GM12878 (cell line): ENCODE measurements at regions of chr6 and their contacts with region 1.

Region 1: GRCh38 chr6:36302227-36302976 is 32.5 kb downstream of the PNPLA1 start:
- DNase-seq: peak; percentile 77
- ATAC-seq: peak; percentile 99
- H3K4me3 ChIP-seq: no peak overlapping the region
- H3K27ac ChIP-seq: no peak overlapping the region
- H3K4me1 ChIP-seq: no peaks in the 10 kb centered on the region
- H3K27me3 ChIP-seq: no peaks in the 10 kb centered on the region
- CTCF ChIP-seq: peak; percentile 88 to 98 (median 98)
- EP300 ChIP-seq: no peak
- POLR2A ChIP-seq: no peak
- RAD21 ChIP-seq: peak; percentile 75

Region 2: DNA sequence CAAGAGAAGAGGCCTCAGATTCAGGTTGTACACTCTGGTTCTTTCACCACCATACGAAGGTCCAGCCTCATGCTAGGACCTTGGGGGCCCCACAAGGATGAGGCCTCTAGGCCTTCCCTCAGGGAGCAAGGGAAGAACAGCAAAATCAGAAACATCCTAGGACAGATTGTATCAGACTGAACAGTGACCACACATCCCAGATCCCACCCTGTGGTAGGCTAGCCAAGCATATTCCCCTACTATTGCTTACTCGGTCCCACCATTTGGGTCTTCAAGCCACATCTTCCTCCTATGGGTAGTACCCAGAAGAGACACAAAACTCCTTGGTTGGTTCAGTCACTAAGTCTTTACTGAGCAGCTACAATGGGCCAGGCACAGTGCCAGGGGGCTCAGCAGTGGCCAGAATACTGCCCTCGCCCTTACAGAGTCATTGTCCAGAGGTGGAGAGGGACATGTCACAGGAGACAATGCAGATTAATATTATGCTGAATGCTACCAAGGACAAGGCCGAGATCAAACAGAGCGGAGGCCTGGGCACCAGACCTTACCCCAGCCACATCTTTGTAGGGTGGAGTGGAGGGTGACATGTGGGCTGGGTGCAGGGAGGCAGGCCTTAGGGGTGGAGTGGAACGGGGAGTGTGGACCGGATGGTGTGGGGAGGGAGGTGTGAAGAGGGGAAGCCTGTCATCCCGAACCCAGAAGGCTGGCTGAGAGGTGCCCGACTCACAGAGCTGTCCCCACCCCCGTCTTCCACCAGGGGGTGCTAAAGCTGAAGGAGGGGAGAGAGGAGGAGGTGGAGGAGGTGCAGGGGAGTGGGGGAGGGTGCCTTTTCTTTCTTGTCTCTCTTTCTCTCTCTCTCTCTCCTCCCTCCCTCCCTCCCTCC is 178.9 kb before region 1 on chr6:
- CTCF ChIA-PET with region 1: interaction called, 19 read pairs
- POLR2A ChIA-PET with region 1: no interaction called
- RAD21 ChIA-PET with region 1: interaction called, 9 read pairs
- SMC1A ChIA-PET with region 1: interaction called, 6 read pairs
- in situ Hi-C with region 1: no loop called
- intact Hi-C with region 1: loop called (anchors 10 kb)
- DNase-seq: no peak
- ATAC-seq: peak; percentile 92
- H3K4me3 ChIP-seq: no peak overlapping the region
- H3K27ac ChIP-seq: no peak overlapping the region
- H3K4me1 ChIP-seq: peaks cover 26% of the 10 kb centered on the region
- H3K27me3 ChIP-seq: no peaks in the 10 kb centered on the region
- CTCF ChIP-seq: peak; percentile 75 to 93 (median 91)
- EP300 ChIP-seq: 0 out of 4 replicates have a peak, but pooled peaks of 1 of the 2 experiments have one; percentile 26
- POLR2A ChIP-seq: no peak
- RAD21 ChIP-seq: peak; percentile 92

Region 3: GRCh38 chr6:36290661-36291620 is 11.5 kb before region 1 on chr6:
- CTCF ChIA-PET with region 1: interaction called, 13 read pairs
- POLR2A ChIA-PET with region 1: interaction called, 4 read pairs
- RAD21 ChIA-PET with region 1: no interaction called
- SMC1A ChIA-PET with region 1: interaction called, 4 read pairs
- in situ Hi-C with region 1: no loop called
- intact Hi-C with region 1: no loop called
- DNase-seq: no peak
- ATAC-seq: no peak
- H3K4me3 ChIP-seq: no peak overlapping the region
- H3K27ac ChIP-seq: no peak overlapping the region
- H3K4me1 ChIP-seq: no peaks in the 10 kb centered on the region
- H3K27me3 ChIP-seq: no peaks in the 10 kb centered on the region
- CTCF ChIP-seq: no peak
- EP300 ChIP-seq: no peak
- POLR2A ChIP-seq: no peak
- RAD21 ChIP-seq: no peak

Region 4: DNA sequence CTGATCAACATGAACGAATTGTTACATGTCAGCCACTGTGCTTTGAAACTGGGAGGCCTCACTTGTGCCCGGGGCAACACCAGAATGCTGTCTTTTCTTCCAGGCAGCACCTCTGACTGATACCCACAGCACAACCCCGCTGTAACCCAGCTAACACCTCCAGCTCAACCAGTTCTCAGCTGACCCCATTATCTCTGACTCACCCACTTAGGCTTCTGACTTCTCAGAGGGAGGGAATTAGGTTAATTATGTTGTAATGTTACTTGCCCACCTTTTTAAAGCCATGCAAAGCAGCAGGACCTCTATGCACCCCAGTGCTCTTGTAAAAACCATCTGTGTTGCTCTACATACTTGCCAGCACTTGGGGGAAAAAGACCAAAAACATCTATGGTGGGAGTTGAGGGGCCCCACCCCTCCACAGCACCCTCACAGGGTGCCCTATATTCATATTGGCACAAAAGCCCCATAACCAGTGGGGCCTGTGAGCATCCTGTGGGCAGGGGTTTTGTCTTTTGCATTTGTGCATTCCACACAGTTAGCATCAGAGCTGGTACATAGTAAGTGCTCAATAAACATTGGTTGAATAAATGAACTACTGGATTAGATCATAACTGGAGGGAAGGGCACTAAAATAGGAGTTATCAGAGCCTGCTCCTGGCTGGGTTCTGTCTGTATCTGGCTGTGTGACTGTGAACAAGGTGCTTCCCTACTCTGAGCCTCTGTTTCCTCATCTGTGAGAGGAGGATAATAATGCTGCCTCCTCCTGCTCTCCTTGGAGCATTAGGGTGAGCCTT is 12.0 kb after region 1 on chr6:
- CTCF ChIA-PET with region 1: interaction called, 31 read pairs
- POLR2A ChIA-PET with region 1: no interaction called
- RAD21 ChIA-PET with region 1: interaction called, 11 read pairs
- SMC1A ChIA-PET with region 1: interaction called, 5 read pairs
- in situ Hi-C with region 1: no loop called
- intact Hi-C with region 1: no loop called
- DNase-seq: no peak
- ATAC-seq: peak; percentile 50
- H3K4me3 ChIP-seq: no peak overlapping the region
- H3K27ac ChIP-seq: no peak overlapping the region
- H3K4me1 ChIP-seq: peaks cover 20% of the 10 kb centered on the region
- H3K27me3 ChIP-seq: no peaks in the 10 kb centered on the region
- CTCF ChIP-seq: no peak
- EP300 ChIP-seq: no peak
- POLR2A ChIP-seq: no peak
- RAD21 ChIP-seq: no peak

Region 5: DNA sequence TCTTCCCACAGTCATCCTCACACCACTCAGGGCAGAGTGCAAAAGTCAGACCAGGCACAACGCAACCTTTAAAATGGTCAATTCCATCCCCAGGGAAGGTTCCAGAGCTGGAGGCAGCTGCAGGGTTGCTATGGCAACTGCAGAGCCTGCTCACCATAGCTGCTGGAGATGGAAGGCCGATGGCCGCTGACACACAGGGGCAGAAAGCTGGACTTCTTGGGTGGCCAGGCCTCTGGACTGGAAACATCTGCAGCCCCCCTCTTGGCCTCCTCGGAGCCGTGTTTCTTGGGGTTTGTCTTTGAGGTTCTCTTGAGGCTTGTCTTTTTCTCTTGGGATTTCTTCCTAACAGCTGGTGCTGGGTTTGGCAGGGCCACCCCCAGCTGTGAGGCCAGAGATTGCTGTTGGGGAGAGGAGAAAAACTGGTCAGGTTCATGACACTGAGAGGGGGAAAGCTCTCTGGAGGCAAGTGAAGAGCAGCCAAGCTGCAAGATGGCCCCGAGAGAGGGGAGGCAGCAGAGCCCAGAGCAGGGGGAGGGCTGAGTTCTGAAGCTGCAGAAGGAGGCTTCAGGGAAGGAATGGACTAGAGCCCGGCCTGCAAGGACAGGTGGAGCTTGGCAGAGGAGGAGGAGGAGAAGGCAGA is 24.1 kb after region 1 on chr6:
- CTCF ChIA-PET with region 1: interaction called, 19 read pairs
- POLR2A ChIA-PET with region 1: interaction called, 4 read pairs
- RAD21 ChIA-PET with region 1: no interaction called
- SMC1A ChIA-PET with region 1: interaction called, 5 read pairs
- in situ Hi-C with region 1: no loop called
- intact Hi-C with region 1: no loop called
- DNase-seq: no peak
- ATAC-seq: no peak
- H3K4me3 ChIP-seq: no peak overlapping the region
- H3K27ac ChIP-seq: no peak overlapping the region
- H3K4me1 ChIP-seq: no peaks in the 10 kb centered on the region
- H3K27me3 ChIP-seq: 0 out of 4 replicates have a peak, but pooled peaks cover 0 to 3% of the 10 kb centered on the region in 2 experiments
- CTCF ChIP-seq: no peak
- EP300 ChIP-seq: no peak
- POLR2A ChIP-seq: no peak
- RAD21 ChIP-seq: no peak

Region 6: GRCh38 chr6:36333931-36334725 is 31.7 kb after region 1 on chr6:
- CTCF ChIA-PET with region 1: interaction called, 19 read pairs
- POLR2A ChIA-PET with region 1: interaction called, 6 read pairs
- RAD21 ChIA-PET with region 1: interaction called, 16 read pairs
- SMC1A ChIA-PET with region 1: interaction called, 7 read pairs
- in situ Hi-C with region 1: no loop called
- intact Hi-C with region 1: loop called (anchors 5 kb)
- DNase-seq: no peak
- ATAC-seq: no peak
- H3K4me3 ChIP-seq: no peak overlapping the region
- H3K27ac ChIP-seq: no peak overlapping the region
- H3K4me1 ChIP-seq: peaks cover 22% of the 10 kb centered on the region
- H3K27me3 ChIP-seq: peaks cover 0 to 6% of the 10 kb centered on the region in 2 experiments; a peak in 1 of 4 replicates
- CTCF ChIP-seq: no peak
- EP300 ChIP-seq: no peak
- POLR2A ChIP-seq: no peak
- RAD21 ChIP-seq: no peak

Region 7: GRCh38 chr6:36340618-36341454 is 38.4 kb after region 1 on chr6:
- CTCF ChIA-PET with region 1: interaction called, 21 read pairs
- POLR2A ChIA-PET with region 1: interaction called, 6 read pairs
- RAD21 ChIA-PET with region 1: interaction called, 16 read pairs
- SMC1A ChIA-PET with region 1: interaction called, 7 read pairs
- in situ Hi-C with region 1: no loop called
- intact Hi-C with region 1: loop called (anchors 5 kb)
- DNase-seq: peak; percentile 34
- ATAC-seq: peak; percentile 80
- H3K4me3 ChIP-seq: no peak overlapping the region
- H3K27ac ChIP-seq: no peak overlapping the region
- H3K4me1 ChIP-seq: peaks cover 40% of the 10 kb centered on the region
- H3K27me3 ChIP-seq: no peaks in the 10 kb centered on the region
- CTCF ChIP-seq: peak; percentile 91 to 100 (median 98)
- EP300 ChIP-seq: no peak
- POLR2A ChIP-seq: no peak
- RAD21 ChIP-seq: peak; percentile 67

Region 8: DNA sequence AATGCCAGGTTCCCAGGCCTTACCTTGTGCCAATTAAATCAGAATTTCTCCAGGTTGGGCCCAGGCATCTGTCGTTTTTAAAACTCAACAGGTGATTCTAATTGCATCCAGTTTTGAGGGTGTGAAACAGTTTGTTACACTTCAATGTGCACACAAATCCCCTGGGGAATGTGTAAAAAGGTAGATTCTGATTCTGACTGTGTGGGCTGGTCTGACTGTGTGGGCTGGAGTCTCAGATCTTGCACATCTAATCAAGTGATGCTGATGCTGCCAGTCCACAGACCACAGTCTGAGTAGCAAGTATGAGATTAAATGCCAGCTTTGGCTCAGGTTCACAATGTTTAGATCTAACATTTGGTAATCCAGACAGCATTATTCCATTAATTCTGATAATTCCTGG is 97.6 kb after region 1 on chr6:
- CTCF ChIA-PET with region 1: no interaction called
- POLR2A ChIA-PET with region 1: no interaction called
- RAD21 ChIA-PET with region 1: no interaction called
- SMC1A ChIA-PET with region 1: no interaction called
- in situ Hi-C with region 1: no loop called
- intact Hi-C with region 1: no loop called
- DNase-seq: no peak
- ATAC-seq: peak; percentile 97
- H3K4me3 ChIP-seq: no peak overlapping the region
- H3K27ac ChIP-seq: no peak overlapping the region
- H3K4me1 ChIP-seq: peaks cover 8% of the 10 kb centered on the region
- H3K27me3 ChIP-seq: no peaks in the 10 kb centered on the region
- CTCF ChIP-seq: no peak
- EP300 ChIP-seq: peak; percentile 28 to 68; a peak in 1 of 4 replicates
- POLR2A ChIP-seq: no peak
- RAD21 ChIP-seq: no peak

Region 9: DNA sequence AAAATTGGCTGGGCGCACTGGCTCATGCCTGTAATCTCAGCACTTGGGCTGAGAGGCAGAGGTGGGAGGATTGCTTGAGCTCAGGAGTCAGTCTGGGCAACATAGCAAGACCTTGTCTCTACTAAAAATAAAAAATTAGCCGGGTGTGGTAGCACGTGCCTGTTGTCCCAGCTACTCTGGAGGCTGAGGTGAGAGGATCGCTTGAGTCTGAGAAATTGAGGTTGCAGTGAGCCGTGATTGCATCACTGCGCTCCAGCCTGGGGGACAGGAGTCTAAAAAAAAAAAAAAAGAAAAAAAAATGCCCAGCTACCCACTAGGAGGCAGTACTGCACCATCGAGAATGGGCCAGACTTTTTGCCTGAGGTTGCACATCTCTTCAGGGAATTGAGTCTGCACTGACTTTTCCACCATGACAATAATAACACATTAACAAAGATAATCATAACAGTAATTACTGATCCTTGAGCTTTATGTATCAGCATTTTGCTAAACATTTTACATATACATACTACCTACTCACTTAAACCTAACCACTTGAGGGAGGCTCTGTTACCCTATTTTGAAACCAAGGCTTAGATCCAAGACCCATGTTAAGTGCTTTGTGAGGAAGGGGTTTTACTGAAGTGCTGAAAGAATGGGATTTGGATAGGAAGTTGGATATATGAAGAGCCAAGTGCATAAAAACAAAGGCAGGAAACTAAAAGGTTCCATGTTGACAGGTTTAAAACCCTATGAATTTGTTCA is 312.8 kb after region 1 on chr6:
- CTCF ChIA-PET with region 1: no interaction called
- POLR2A ChIA-PET with region 1: no interaction called
- RAD21 ChIA-PET with region 1: no interaction called
- SMC1A ChIA-PET with region 1: no interaction called
- in situ Hi-C with region 1: no loop called
- intact Hi-C with region 1: no loop called
- DNase-seq: no peak
- ATAC-seq: peak; percentile 69
- H3K4me3 ChIP-seq: no peak overlapping the region
- H3K27ac ChIP-seq: no peak overlapping the region
- H3K4me1 ChIP-seq: peaks cover 6% of the 10 kb centered on the region
- H3K27me3 ChIP-seq: no peaks in the 10 kb centered on the region
- CTCF ChIP-seq: peak; percentile 74 to 84 (median 80)
- EP300 ChIP-seq: no peak
- POLR2A ChIP-seq: no peak
- RAD21 ChIP-seq: peak; percentile 97